PC-3 (cell line): ENCODE measurements at regions of chr3 and their contacts with region 1.

Region 1: GRCh38 chr3:49454458-49454857 is 15.6 kb upstream of the DAG1 start:
- DNase-seq: peak; percentile 66
- ATAC-seq: peak; percentile 89
- H3K4me3 ChIP-seq: no peak overlapping the region
- H3K27ac ChIP-seq: no peak overlapping the region
- H3K4me1 ChIP-seq: 0 out of 2 replicates have a peak, but pooled peaks cover 4% of the 10 kb centered on the region
- H3K27me3 ChIP-seq: no peaks in the 10 kb centered on the region
- CTCF ChIP-seq: peak; percentile 65

Region 2: GRCh38 chr3:48845170-48845569 is 609.3 kb before region 1 on chr3:
- CTCF ChIA-PET with region 1: no interaction called
- POLR2A ChIA-PET with region 1: no interaction called
- intact Hi-C with region 1: no loop called
- DNase-seq: no peak
- ATAC-seq: no peak
- H3K4me3 ChIP-seq: peak overlapping the region; percentile 76; the same call in 1 of the 2 replicates
- H3K27ac ChIP-seq: no peak overlapping the region
- H3K4me1 ChIP-seq: peaks cover 7% of the 10 kb centered on the region
- H3K27me3 ChIP-seq: no peaks in the 10 kb centered on the region
- CTCF ChIP-seq: no peak

Region 3: DNA sequence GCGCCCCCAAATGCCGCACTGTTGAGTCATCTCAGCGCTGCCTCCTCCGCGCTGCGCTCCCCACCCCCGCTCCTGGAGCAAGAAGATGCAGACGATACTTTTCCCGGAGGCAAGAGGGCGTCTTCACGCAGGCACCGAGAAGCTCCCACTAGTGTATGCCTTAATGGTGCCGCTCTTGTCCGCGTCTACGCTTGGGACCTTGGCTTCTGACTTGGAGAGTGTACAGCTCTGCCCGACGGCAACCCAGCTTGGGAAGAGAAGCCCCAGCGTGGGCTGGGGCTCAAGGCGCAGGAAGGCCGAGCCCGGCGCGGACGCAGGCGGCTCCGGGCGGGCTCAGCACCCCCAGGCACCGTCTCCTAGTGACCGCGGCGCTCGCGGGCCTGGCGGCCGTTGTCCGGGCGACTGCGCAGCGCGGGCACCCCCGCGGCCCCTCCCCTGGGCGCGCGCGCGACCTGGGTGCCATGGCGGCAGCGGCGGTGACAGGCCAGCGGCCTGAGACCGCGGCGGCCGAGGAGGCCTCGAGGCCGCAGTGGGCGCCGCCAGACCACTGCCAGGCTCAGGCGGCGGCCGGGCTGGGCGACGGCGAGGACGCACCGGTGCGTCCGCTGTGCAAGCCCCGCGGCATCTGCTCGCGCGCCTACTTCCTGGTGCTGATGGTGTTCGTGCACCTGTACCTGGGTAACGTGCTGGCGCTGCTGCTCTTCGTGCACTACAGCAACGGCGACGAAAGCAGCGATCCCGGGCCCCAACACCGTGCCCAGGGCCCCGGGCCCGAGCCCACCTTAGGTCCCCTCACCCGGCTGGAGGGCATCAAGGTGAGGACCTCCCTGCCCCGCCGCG is 464.4 kb before region 1 on chr3 and contains the start of gene P4HTM:
- CTCF ChIA-PET with region 1: interaction called, 3 read pairs
- POLR2A ChIA-PET with region 1: no interaction called
- intact Hi-C with region 1: loop called (anchors 1 kb)
- DNase-seq: peak; percentile 88
- ATAC-seq: peak; percentile 73
- H3K4me3 ChIP-seq: peak within 1 kb of the TSS; percentile 90
- H3K27ac ChIP-seq: peak within 1 kb of the TSS; percentile 49
- H3K4me1 ChIP-seq: peaks cover 22% of the 10 kb centered on the region
- H3K27me3 ChIP-seq: no peaks in the 10 kb centered on the region
- CTCF ChIP-seq: peak; percentile 51
- total RNA-seq, gene P4HTM: 44.5 and 50.1 TPM in 2 replicates

Region 4: DNA sequence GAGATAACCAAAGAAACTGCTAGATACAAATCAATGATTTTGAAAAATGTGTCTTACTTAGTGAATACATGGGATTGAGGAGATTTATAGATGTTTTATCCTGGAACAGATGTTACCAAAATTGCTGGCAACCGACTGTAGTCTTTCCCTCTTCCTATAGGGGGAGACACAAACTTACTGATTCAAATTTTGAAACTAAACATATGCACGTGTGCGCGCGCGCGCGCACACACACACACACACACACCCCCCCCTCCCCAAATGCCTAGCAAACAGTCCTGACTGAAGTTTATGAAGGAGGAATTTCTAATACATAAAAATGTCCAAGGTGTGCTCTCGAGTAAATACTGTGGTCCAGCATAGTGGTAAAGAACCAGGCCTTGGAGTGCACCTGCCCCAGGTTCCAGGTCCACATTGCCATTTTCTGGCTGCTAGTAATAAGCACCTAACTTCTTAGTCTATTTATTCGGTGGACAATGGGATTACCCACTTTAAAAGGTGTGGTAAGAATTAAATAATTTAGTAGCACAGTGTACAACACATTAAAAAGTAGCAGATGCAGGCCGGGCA is 158.9 kb before region 1 on chr3:
- CTCF ChIA-PET with region 1: no interaction called
- POLR2A ChIA-PET with region 1: no interaction called
- intact Hi-C with region 1: loop called (anchors 1 kb)
- DNase-seq: peak; percentile 65
- ATAC-seq: peak; percentile 31; the same call in 1 of the 2 replicates
- H3K4me3 ChIP-seq: no peak overlapping the region
- H3K27ac ChIP-seq: no peak overlapping the region
- H3K4me1 ChIP-seq: no peaks in the 10 kb centered on the region
- H3K27me3 ChIP-seq: no peaks in the 10 kb centered on the region
- CTCF ChIP-seq: peak; percentile 90

Region 5: DNA sequence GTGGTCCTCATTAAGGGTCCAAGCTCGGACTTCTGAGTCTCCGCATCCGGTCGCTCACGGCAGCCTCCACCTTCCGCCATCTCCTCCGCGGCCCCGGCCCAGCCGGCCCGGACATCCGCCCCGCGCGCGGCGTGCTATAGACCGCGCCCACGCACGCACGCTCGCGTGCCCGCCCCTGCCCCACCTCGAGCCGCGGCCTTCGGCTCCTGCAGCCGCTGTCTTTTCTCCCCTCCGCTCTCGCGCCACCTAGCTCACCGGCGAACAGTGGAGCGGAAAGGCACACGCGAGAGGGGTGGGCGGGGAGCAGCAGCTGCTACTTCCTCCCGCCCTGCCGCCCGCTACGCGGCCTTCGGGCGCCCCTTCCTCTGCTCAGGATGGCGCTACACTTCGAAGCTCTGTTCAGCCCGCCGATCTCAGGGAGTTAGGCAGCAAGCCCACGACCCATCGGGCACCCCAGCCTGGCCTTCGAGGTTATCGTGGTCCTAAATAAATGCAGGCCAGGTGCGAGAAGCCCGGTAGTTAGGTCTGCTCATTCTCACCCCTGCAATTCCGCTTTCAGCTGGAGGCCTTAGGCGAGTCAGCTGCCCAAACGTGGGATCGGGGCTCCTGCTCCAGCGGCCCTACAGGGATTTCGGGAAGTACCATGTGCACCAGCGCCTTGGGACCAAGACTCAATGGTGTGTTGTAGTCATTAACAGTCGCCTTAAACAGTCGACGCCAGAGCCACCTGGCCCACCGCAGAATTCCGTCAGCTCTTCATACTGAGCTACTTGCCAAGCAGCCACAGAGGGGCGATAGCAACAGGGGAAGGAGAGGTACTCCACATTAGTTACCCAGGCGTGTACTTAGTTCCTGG is 114.3 kb before region 1 on chr3 and contains the start of gene USP4:
- CTCF ChIA-PET with region 1: interaction called, 11 read pairs
- POLR2A ChIA-PET with region 1: no interaction called
- intact Hi-C with region 1: loop called (anchors 1 kb)
- DNase-seq: peak; percentile 92
- ATAC-seq: peak; percentile 96
- H3K4me3 ChIP-seq: peak within 1 kb of the TSS; percentile 88
- H3K27ac ChIP-seq: peak within 1 kb of the TSS; percentile 32
- H3K4me1 ChIP-seq: peaks cover 19% of the 10 kb centered on the region
- H3K27me3 ChIP-seq: no peaks in the 10 kb centered on the region
- CTCF ChIP-seq: peak; percentile 33; the same call in 1 of the 2 replicates
- total RNA-seq, gene USP4: 19.9 and 22.8 TPM in 2 replicates

Region 6: DNA sequence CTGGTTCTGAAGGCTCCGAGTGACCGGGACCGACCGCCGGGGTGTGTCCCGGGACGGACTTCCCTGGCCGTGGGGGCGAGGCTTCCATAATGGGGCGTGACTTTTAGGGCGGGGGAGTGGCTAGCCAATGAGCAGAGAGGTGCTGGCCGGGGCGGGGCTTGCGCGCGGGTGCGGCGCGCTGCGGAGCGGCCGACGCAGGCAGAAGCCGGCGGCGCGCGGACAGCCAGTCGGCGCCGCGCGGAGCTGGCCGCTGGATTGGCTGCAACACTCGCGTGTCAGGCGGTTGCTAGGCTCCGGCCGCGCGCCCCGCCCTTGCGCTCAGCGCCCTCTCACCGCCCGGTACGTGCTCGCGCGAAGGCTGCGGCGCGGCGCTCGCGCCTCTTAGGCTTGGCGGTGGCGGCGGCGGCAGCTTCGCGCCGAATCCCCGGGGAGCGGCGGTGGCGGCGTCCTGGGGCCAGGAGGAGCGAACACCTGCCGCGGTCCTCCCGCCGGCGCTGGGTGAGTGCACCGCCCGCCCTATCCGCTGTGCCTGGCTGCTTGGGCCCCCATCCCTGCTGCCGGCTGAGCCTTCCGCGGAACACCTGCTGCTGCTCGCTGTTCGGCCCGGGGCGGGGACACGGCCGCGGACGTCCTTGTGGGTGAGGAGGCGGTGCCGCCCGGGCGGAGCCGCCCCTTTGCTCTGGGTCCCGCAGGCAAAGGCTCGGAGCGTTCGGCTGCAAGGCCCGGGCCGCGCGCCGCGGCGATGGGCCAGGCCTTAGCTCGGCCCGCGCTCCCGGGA is 15.7 kb after region 1 on chr3 and contains the start of gene DAG1:
- CTCF ChIA-PET with region 1: interaction called, 13 read pairs
- POLR2A ChIA-PET with region 1: no interaction called
- intact Hi-C with region 1: no loop called
- DNase-seq: peak; percentile 98
- ATAC-seq: peak; percentile 86
- H3K4me3 ChIP-seq: peak within 1 kb of the TSS; percentile 72
- H3K27ac ChIP-seq: peak within 1 kb of the TSS; percentile 78
- H3K4me1 ChIP-seq: peaks cover 20% of the 10 kb centered on the region
- H3K27me3 ChIP-seq: no peaks in the 10 kb centered on the region
- CTCF ChIP-seq: no peak
- total RNA-seq, gene DAG1: 111 and 114 TPM in 2 replicates